ENCODE measurements at regions of chr12 and their contacts with region 1.

Region 1: DNA sequence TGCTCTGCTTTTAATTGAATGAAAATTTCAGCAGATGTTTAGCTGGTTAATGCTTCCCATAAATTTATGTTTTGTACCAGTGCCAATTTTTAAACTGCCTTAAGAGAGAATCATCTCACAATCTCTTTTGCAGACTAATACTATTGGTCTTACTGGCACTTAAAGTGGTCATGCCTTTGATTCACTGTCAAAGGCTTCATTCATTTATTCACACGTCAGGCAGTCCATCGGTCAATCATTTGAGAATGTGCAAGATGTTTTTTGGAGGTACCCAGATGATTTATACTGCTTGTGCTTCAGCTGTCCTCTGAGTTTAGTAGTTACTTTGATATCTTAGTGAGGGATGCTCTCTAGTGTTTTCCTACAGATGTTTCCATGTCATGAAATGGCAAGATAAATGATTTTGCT is 83.4 kb downstream of the NAV3 start:
- DNase-seq: no peak
- H3K4me3 ChIP-seq: no peak overlapping the region
- H3K27ac ChIP-seq: no peak overlapping the region
- H3K4me1 ChIP-seq: no peaks in the 10 kb centered on the region
- H3K27me3 ChIP-seq: no peaks in the 10 kb centered on the region
- CTCF ChIP-seq: no peak

Region 2: GRCh38 chr12:77724367-77724957 is 189.6 kb before region 1 on chr12:
- intact Hi-C with region 1: loop called (anchors 5 kb)
- DNase-seq: no peak
- H3K4me3 ChIP-seq: no peak overlapping the region
- H3K27ac ChIP-seq: no peak overlapping the region
- H3K4me1 ChIP-seq: no peaks in the 10 kb centered on the region
- H3K27me3 ChIP-seq: no peaks in the 10 kb centered on the region
- CTCF ChIP-seq: peak; percentile 32 to 54

Region 3: GRCh38 chr12:77796775-77797174 is 117.3 kb before region 1 on chr12:
- intact Hi-C with region 1: no loop called
- DNase-seq: no peak
- H3K4me3 ChIP-seq: no peak overlapping the region
- H3K27ac ChIP-seq: no peak overlapping the region
- H3K4me1 ChIP-seq: no peaks in the 10 kb centered on the region
- H3K27me3 ChIP-seq: no peaks in the 10 kb centered on the region
- CTCF ChIP-seq: no peak

Region 4: DNA sequence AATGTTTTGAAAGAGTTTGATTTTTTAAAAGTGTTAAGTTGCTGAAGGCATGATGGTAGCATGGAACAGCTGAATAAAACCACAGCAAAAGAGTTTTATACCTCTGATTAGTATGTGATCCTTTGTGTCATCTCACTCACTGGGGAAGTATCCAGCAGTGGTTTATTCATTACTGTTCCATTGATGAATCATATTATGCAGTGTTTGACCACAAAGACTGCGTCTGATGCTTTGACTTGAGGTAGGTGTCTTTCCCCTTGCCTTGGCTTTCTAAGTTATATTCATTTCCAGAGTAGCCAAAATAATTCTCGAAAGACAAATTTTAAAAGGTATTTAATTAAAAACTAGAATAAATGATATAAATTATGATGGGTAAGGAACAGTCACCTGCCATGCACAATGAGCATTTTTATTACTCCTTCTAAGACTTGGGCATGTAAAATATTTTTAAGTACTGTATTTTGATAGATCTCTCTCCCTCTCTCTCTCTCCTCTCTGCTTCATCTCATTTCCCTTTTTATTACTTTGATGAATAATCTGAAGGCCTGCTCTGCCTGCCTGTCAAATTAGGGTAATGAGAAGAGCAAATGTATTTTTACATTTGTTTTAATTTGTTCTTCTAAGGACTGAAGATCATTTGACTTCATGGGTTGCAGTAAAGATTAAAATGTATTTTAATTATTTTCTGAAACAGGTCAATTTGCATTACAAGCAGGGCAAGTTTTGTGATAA is 81.5 kb after region 1 on chr12:
- intact Hi-C with region 1: no loop called
- DNase-seq: no peak
- H3K4me3 ChIP-seq: no peak overlapping the region
- H3K27ac ChIP-seq: no peak overlapping the region
- H3K4me1 ChIP-seq: no peaks in the 10 kb centered on the region
- H3K27me3 ChIP-seq: no peaks in the 10 kb centered on the region
- CTCF ChIP-seq: no peak

Region 5: GRCh38 chr12:79203058-79203457 is 1289.0 kb after region 1 on chr12:
- intact Hi-C with region 1: no loop called
- DNase-seq: no peak
- H3K4me3 ChIP-seq: no peak overlapping the region
- H3K27ac ChIP-seq: no peak overlapping the region
- H3K4me1 ChIP-seq: no peaks in the 10 kb centered on the region
- H3K27me3 ChIP-seq: no peaks in the 10 kb centered on the region
- CTCF ChIP-seq: no peak

Measured in tibial artery (tissue), 4 donors.